ENCODE measurements at regions of chr1 and their contacts with region 1.

Region 1: GRCh38 chr1:29708901-29709710 is 472.8 kb downstream of the PTPRU start:
- DNase-seq: no peak
- H3K4me3 ChIP-seq: no peak overlapping the region
- H3K27ac ChIP-seq: peak overlapping the region; percentile 95
- H3K4me1 ChIP-seq: peaks cover 48% of the 10 kb centered on the region
- H3K27me3 ChIP-seq: peaks cover 10 to 12% of the 10 kb centered on the region in 2 experiments
- CTCF ChIP-seq: no peak
- POLR2A ChIP-seq: peak; percentile 60

Region 2: DNA sequence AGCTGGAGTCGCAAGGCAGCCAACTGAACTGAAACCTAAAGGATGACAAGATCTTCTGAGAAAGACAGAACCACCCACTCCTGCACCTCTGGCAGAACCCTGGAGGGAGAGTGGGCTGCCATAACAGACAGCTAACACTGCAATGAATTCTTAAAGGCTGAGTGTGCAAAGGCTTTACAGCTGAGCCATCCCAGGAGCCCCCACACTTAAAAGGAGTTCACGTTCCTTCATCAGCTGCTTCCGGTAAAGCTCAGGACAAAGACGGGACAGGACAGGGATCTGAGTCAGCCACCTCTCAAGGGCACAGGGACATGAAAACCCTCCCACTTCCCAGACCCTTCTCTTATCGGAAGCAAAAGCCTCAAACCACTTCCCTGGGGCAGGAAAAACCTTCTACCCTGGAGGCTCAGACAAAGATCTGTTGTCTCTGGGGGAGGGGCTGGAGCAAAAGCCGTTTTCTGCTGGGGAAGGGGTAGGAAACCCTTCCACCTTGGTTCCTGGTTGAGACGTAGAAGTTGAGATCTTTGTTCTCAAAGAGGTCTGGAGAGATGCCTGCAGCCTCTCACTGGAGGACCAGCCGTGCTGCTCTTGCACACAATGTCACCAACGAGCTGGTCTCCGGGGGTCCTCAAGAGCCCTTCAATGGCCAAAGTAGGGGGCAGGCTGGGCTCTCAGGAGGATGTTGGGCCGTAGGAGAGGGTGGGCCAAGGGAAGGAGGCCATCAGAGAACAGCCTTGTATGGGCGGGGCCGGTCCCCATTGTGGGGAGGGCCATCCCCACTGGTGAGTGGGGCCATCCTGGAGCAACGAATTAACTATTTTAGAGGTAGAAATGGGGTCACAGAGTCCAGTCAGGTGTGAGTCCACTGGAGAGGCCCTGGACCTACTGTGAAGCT is 20.4 kb before region 1 on chr1:
- CTCF ChIA-PET with region 1: interaction called, 71 read pairs
- POLR2A ChIA-PET with region 1: no interaction called
- dilution Hi-C with region 1: no loop called
- intact Hi-C with region 1: loop called (anchors 1 kb)
- DNase-seq: peak; percentile 56
- H3K4me3 ChIP-seq: no peak overlapping the region
- H3K27ac ChIP-seq: peak overlapping the region; percentile 1
- H3K4me1 ChIP-seq: peaks cover 13% of the 10 kb centered on the region
- H3K27me3 ChIP-seq: peaks cover 4 to 6% of the 10 kb centered on the region in 2 experiments
- CTCF ChIP-seq: no peak
- POLR2A ChIP-seq: no peak

Region 3: GRCh38 chr1:29849038-29849750 is 140.1 kb after region 1 on chr1:
- CTCF ChIA-PET with region 1: interaction called, 3 read pairs
- POLR2A ChIA-PET with region 1: no interaction called
- dilution Hi-C with region 1: no loop called
- intact Hi-C with region 1: loop called (anchors 1 kb)
- DNase-seq: peak; percentile 21
- H3K4me3 ChIP-seq: no peak overlapping the region
- H3K27ac ChIP-seq: no peak overlapping the region
- H3K4me1 ChIP-seq: no peaks in the 10 kb centered on the region
- H3K27me3 ChIP-seq: no peaks in the 10 kb centered on the region
- CTCF ChIP-seq: peak; percentile 23 to 34
- POLR2A ChIP-seq: no peak

Region 4: GRCh38 chr1:30111431-30111830 is 402.3 kb after region 1 on chr1:
- CTCF ChIA-PET with region 1: interaction called, 14 read pairs
- POLR2A ChIA-PET with region 1: no interaction called
- dilution Hi-C with region 1: no loop called
- intact Hi-C with region 1: no loop called
- DNase-seq: peak; percentile 18
- H3K4me3 ChIP-seq: no peak overlapping the region
- H3K27ac ChIP-seq: no peak overlapping the region
- H3K4me1 ChIP-seq: no peaks in the 10 kb centered on the region
- H3K27me3 ChIP-seq: peaks cover 0 to 1% of the 10 kb centered on the region in 2 experiments
- CTCF ChIP-seq: peak; percentile 53 to 56
- POLR2A ChIP-seq: no peak